ENCODE measurements at regions of chr4 and their contacts with region 1.

Region 1: DNA sequence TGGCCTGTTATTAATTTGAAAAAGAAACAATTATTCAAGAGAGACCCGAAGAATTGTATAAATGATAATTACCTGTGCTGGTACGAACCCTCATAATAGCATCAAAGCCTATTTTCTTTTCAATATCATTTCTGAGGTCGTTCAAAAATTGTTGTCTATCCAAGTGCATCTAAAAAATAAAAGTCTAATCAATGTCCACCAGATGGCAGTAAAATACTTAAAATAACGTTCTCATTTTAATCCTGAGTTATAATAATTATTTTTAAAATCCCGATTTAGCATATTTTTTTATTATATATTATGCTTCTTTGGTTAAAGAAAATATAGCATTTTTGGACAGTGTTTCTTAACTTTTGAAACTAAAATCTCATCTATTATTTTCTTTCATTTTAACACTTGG is 55.7 kb downstream of the METTL14 start:
- DNase-seq: no peak
- H3K4me3 ChIP-seq: peak overlapping the region in 1 of 4 donors; percentile 7
- H3K27ac ChIP-seq: peak overlapping the region; percentile 59 to 75 (median 70)
- H3K4me1 ChIP-seq: peaks cover 0 to 9% (median 0%) of the 10 kb centered on the region in 4 donors
- H3K27me3 ChIP-seq: no peaks in the 10 kb centered on the region
- CTCF ChIP-seq: peak; percentile 40 to 53 (median 46)
- EP300 ChIP-seq: no peak
- POLR2A ChIP-seq: no peak

Region 2: DNA sequence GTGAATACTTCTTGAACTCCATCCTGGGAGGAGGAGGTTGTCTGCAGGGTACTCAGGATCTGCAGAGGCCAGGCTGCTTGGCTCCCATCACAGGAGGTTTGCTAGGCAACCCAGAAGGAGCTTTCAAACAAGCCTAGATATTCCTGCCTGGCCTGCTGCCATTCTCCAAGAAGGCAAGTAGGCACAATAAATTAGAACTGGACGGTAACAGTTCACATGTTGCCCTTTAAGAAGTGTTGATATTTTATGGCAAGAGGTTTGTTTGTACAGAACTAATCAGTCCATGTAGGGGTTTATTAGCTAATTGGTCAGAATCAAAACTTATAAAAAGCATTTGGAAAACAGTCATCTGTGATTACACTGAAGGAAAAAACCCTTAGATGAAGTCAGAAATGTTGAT is 187.1 kb after region 1 on chr4:
- in situ Hi-C with region 1: no loop called
- intact Hi-C with region 1: no loop called
- DNase-seq: peak; percentile 46
- H3K4me3 ChIP-seq: no peak overlapping the region
- H3K27ac ChIP-seq: peak overlapping the region; percentile 16 to 80 (median 58)
- H3K4me1 ChIP-seq: peaks cover 0 to 21% (median 5%) of the 10 kb centered on the region in 4 donors
- H3K27me3 ChIP-seq: no peaks in the 10 kb centered on the region
- CTCF ChIP-seq: no peak
- EP300 ChIP-seq: no peak
- POLR2A ChIP-seq: no peak

Region 3: DNA sequence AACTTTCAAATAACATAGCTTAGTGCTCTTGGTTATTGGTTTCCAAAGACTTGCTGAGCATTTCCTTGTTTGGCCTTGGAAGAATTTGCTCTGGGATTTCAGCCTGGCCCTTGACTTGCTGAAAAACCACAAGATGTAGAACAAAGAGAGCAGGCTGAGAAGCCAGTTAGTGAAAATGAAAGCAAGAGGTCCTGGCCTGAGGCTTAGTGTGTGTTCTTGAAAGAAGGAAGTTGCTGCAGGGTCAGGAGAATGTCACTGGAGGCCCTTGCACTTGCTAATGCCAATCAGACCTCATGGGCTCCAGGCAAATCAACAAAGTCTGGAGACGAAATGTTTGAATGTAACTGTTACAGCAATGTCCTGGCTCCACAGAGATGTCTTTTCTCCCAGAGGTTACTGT is 227.1 kb after region 1 on chr4:
- in situ Hi-C with region 1: no loop called
- intact Hi-C with region 1: loop called (anchors 5 kb)
- DNase-seq: peak; percentile 43
- H3K4me3 ChIP-seq: no peak overlapping the region
- H3K27ac ChIP-seq: peak overlapping the region; percentile 82 to 88 (median 86)
- H3K4me1 ChIP-seq: peaks cover 17 to 63% (median 24%) of the 10 kb centered on the region in 4 donors
- H3K27me3 ChIP-seq: no peaks in the 10 kb centered on the region
- CTCF ChIP-seq: no peak
- EP300 ChIP-seq: no peak
- POLR2A ChIP-seq: no peak

Region 4: DNA sequence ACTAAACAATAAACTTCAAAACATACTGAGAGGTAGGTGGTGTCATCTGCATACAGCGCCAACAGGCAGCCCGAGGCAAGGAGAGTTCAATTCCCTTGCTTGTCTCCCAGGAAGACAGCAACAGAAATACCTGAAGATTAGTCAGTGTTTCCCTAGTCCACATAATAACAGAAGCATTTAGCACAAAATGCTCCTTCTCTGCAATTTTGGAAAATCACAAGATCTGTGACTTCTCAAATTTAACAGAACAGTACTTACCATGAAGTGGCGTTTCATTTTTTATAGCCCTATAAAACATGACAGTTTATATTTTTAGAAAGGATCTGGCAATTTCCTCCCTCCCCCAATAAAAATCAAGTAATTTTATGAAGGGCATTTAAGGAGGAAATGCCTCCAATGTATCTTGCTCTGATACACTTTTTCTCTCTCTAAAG is 327.7 kb after region 1 on chr4:
- in situ Hi-C with region 1: no loop called
- intact Hi-C with region 1: no loop called
- DNase-seq: no peak
- H3K4me3 ChIP-seq: no peak overlapping the region
- H3K27ac ChIP-seq: peak overlapping the region; percentile 62 to 72 (median 66)
- H3K4me1 ChIP-seq: peaks cover 7 to 17% (median 11%) of the 10 kb centered on the region in 4 donors
- H3K27me3 ChIP-seq: no peaks in the 10 kb centered on the region
- CTCF ChIP-seq: no peak
- EP300 ChIP-seq: no peak
- POLR2A ChIP-seq: no peak

Region 5: GRCh38 chr4:119172223-119172622 is 431.4 kb after region 1 on chr4:
- in situ Hi-C with region 1: no loop called
- intact Hi-C with region 1: no loop called
- DNase-seq: no peak
- H3K4me3 ChIP-seq: no peak overlapping the region
- H3K27ac ChIP-seq: no peak overlapping the region
- H3K4me1 ChIP-seq: no peaks in the 10 kb centered on the region
- H3K27me3 ChIP-seq: no peaks in the 10 kb centered on the region
- CTCF ChIP-seq: no peak
- EP300 ChIP-seq: no peak
- POLR2A ChIP-seq: no peak

Region 6: GRCh38 chr4:119286377-119287002 is 545.6 kb after region 1 on chr4:
- in situ Hi-C with region 1: loop called in 1 of 4 experiments (anchors 25 kb)
- intact Hi-C with region 1: no loop called
- DNase-seq: no peak
- H3K4me3 ChIP-seq: no peak overlapping the region
- H3K27ac ChIP-seq: peak overlapping the region in 1 of 4 donors; percentile 49
- H3K4me1 ChIP-seq: peaks cover 0 to 28% (median 16%) of the 10 kb centered on the region in 4 donors
- H3K27me3 ChIP-seq: no peaks in the 10 kb centered on the region
- CTCF ChIP-seq: peak; percentile 48 to 76 (median 56)
- EP300 ChIP-seq: no peak
- POLR2A ChIP-seq: no peak

Measured in transverse colon (tissue), 4 donors.